ENCODE measurements at regions of chr14 and their contacts with region 1.

Region 1: DNA sequence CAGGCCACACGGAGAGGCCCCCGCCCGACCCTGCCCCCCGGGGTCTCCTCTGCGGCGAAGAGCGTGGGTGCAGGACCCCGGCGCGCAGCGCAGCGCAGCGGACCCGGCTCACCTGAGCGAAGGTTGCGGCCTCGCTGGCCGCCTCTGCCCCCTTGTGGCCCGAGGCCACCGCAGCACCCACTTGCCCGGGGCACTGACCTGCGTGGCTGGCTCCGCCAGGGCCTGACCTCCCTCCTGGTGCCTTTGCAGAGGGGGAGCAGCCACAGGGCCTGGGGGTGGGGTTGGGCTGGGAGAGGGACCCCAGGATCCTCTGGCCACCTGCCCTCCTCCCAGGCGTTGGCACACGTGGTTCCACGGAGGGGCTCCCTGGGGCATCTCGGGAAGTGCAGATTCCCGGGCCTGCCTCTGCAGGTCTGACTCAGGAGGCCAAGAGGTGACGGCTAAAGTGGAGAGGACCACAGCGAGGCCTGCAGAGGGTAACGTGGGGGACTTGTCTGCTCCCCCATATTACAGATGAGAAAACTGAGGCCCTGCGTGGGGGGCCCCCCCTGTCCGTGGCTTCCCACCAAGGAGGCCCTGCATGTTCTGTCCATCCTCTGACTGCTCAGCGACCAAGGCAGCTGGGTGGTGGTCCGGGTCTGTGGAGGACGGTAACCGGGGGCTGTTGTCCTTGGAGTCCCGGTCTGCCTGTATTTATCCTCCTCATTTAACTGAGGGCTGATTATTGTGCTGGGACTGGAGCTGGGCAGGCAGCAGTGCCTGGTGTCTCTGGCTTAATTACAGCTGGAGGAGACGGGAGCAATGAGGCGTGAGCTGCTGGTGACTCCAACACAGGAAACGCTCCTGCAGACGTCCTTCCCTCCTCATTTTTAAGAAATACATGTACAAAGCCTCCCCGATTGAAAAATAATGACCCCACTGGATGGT is 67.9 kb upstream of the BEGAIN start:
- DNase-seq: peak; percentile 46
- ATAC-seq: peak; percentile 77
- H3K4me3 Mint-ChIP-seq: no peak overlapping the region
- H3K27ac Mint-ChIP-seq: no peak overlapping the region
- H3K4me1 Mint-ChIP-seq: peaks cover 5% of the 10 kb centered on the region
- H3K27me3 Mint-ChIP-seq: peaks cover 15% of the 10 kb centered on the region
- CTCF ChIP-seq: peak; percentile 70

Region 2: GRCh38 chr14:100524933-100525243 is 130.2 kb before region 1 on chr14:
- CTCF ChIA-PET with region 1: interaction called, 19 read pairs
- POLR2A ChIA-PET with region 1: no interaction called
- intact Hi-C with region 1: no loop called
- DNase-seq: peak; percentile 56
- ATAC-seq: peak; percentile 47
- H3K4me3 Mint-ChIP-seq: no peak overlapping the region
- H3K27ac Mint-ChIP-seq: no peak overlapping the region
- H3K4me1 Mint-ChIP-seq: no peaks in the 10 kb centered on the region
- H3K27me3 Mint-ChIP-seq: no peaks in the 10 kb centered on the region
- CTCF ChIP-seq: peak; percentile 55

Measured in activated CD8-positive, alpha-beta T cell treated with anti-CD3 and anti-CD28 coated beads for 36 hours (primary cell).